AG04450 (cell line): ENCODE measurements at regions of chr15 and their contacts with region 1.

Region 1: GRCh38 chr15:59492389-59493377 is 54.7 kb downstream of the FAM81A start:
- DNase-seq: peak; percentile 21
- H3K4me3 ChIP-seq: no peak overlapping the region
- H3K27ac ChIP-seq: no peak overlapping the region
- H3K27me3 ChIP-seq: no peaks in the 10 kb centered on the region
- CTCF ChIP-seq: peak; percentile 87

Region 2: GRCh38 chr15:58980351-58980939 is 512.2 kb before region 1 on chr15:
- CTCF ChIA-PET with region 1: interaction called, 10 read pairs
- POLR2A ChIA-PET with region 1: no interaction called
- DNase-seq: no peak
- H3K4me3 ChIP-seq: no peak overlapping the region
- H3K27ac ChIP-seq: no peak overlapping the region
- H3K27me3 ChIP-seq: no peaks in the 10 kb centered on the region
- CTCF ChIP-seq: peak; percentile 54

Region 3: DNA sequence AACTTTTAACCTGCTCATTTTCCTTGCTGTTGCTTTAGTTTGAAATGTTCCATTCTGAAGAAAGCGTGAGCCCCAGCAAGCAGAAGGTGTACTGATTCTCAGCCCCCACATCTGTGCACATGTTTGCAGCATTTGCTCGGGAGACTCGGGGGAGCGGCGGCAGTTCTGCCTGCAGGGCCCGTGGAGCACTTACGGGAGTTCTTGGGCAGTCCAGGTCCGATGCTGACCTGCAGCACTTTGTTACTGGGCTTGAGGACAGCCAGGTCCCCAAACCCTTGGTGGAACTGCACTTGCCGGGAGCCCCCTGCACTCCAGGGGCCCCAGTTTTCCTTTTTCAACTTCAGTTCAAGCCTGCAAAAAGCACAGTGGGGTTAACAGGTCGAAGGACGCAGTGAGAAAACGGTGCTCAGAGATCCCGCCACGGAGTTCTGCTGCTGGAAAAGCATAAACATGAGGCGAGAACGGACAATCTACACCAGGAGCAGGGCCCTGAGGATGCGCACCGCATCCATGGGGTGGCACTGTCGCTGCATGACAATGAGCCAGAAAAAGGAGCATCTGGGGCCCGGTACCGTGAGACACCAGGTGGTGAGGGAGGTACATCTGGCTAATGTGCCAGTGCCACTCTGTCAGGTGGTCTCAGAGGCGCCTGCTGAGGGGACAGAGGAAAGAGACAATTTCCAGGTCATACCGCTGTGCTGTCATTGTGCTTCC is 331.6 kb before region 1 on chr15:
- CTCF ChIA-PET with region 1: interaction called, 26 read pairs
- POLR2A ChIA-PET with region 1: no interaction called
- DNase-seq: no peak
- H3K4me3 ChIP-seq: no peak overlapping the region
- H3K27ac ChIP-seq: no peak overlapping the region
- H3K27me3 ChIP-seq: no peaks in the 10 kb centered on the region
- CTCF ChIP-seq: peak; percentile 70

Region 4: GRCh38 chr15:59437817-59438562 is 54.7 kb before region 1 on chr15 and contains the start of gene FAM81A:
- CTCF ChIA-PET with region 1: no interaction called
- POLR2A ChIA-PET with region 1: no interaction called
- DNase-seq: no peak
- H3K4me3 ChIP-seq: peak within 1 kb of the TSS; percentile 60
- H3K27ac ChIP-seq: no peak within 1 kb of the TSS
- H3K27me3 ChIP-seq: peaks cover 48% of the 10 kb centered on the region
- CTCF ChIP-seq: no peak
- polyA plus RNA-seq, gene FAM81A: not detected in 2 replicates